MCF 10A (cell line): ENCODE measurements at regions of chr19 and their contacts with region 1.

Region 1: GRCh38 chr19:42596391-42597072 is 1.8 kb upstream of the CEACAM8 start:
- DNase-seq: peak; percentile 33
- H3K4me3 Mint-ChIP-seq: no peak overlapping the region
- H3K27ac Mint-ChIP-seq: no peak overlapping the region
- H3K4me1 Mint-ChIP-seq: no peaks in the 10 kb centered on the region
- H3K27me3 Mint-ChIP-seq: peaks cover 49% of the 10 kb centered on the region
- CTCF ChIP-seq: peak; percentile 96

Region 2: DNA sequence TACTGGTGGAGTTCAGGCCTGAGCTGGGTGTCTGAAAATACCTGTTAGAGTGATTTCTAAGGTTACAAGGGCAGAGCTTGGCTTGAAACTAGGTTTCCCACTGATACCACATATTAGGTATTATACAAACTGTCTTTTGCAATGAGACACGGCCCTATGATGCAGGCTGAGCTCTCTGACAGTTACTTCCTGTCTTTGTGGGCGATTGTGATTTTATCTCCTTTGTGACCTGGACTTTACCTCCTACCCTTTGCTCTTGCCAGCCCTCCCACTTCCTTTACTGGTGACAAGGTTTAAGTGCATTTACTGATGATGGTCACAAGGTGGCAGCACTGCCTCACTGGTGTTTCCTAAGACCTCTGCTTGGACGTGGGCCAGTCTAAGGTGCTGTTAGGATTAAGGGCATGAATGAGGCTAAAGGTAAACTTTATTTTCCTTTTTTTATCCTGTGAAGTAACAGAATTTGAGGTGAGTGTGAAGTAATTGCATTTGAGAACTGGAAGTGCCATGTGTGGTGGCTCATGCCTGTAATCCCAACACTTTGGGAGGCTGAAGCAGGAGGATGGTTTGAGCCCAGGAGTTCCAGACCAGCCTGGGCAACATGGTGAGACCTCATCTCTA is 146.1 kb before region 1 on chr19:
- CTCF ChIA-PET with region 1: interaction called, 14 read pairs
- POLR2A ChIA-PET with region 1: no interaction called
- intact Hi-C with region 1: loop called (anchors 2 kb)
- DNase-seq: peak; percentile 94
- H3K4me3 Mint-ChIP-seq: no peak overlapping the region
- H3K27ac Mint-ChIP-seq: no peak overlapping the region
- H3K4me1 Mint-ChIP-seq: peaks cover under 1% of the 10 kb centered on the region
- H3K27me3 Mint-ChIP-seq: peaks cover 14% of the 10 kb centered on the region
- CTCF ChIP-seq: peak; percentile 90

Region 3: DNA sequence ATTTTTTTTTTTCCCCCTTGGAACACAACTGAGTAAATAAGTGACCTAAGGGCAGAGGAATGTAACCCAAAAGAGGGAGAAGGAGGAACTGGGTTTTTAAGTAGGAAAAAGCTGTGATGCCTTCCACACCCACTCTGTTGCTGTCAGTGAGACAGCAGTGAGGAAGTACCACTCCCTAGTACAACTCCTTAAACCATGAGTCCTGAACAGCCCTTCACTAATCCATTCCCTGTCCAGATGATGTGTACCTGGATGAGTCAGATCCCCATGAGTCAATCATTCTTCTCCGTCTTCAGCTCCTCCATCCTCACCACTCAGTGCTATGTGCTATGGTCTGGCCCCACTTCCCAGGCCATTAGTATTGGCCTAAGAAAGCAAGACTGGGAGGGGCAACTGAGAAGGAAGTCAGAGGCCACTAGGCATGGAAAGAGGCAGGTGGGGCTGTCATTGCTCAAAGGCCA is 140.9 kb before region 1 on chr19:
- CTCF ChIA-PET with region 1: interaction called, 14 read pairs
- POLR2A ChIA-PET with region 1: no interaction called
- intact Hi-C with region 1: loop called (anchors 2 kb)
- DNase-seq: peak; percentile 77
- H3K4me3 Mint-ChIP-seq: no peak overlapping the region
- H3K27ac Mint-ChIP-seq: no peak overlapping the region
- H3K4me1 Mint-ChIP-seq: peaks cover 7% of the 10 kb centered on the region
- H3K27me3 Mint-ChIP-seq: peaks cover 14% of the 10 kb centered on the region
- CTCF ChIP-seq: no peak

Region 4: DNA sequence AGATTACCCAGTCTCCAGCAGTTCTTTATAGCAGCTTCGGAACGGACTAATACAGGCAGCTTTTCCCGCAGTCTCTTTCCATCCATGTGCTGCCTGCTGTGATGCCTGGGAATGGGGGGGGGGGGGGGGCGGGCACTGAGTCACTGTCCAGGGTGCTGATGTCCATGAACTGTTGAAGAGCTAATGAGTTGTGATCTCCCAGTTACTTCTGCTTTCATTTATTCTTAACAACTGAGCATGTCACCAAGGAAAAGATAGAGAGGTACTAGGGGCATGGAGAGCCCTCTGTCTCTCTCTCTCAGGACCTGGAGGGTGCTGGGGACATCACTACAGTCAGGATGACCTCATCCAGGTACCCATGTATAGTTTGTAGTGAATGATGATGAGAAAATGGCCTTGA is 48.0 kb before region 1 on chr19:
- CTCF ChIA-PET with region 1: no interaction called
- POLR2A ChIA-PET with region 1: no interaction called
- intact Hi-C with region 1: no loop called
- DNase-seq: no peak
- H3K4me3 Mint-ChIP-seq: no peak overlapping the region
- H3K27ac Mint-ChIP-seq: no peak overlapping the region
- H3K4me1 Mint-ChIP-seq: no peaks in the 10 kb centered on the region
- H3K27me3 Mint-ChIP-seq: peaks cover 28% of the 10 kb centered on the region
- CTCF ChIP-seq: no peak

Region 5: GRCh38 chr19:42563352-42564210 is 33.0 kb before region 1 on chr19:
- CTCF ChIA-PET with region 1: interaction called, 31 read pairs
- POLR2A ChIA-PET with region 1: no interaction called
- intact Hi-C with region 1: loop called (anchors 1 kb)
- DNase-seq: peak; percentile 60
- H3K4me3 Mint-ChIP-seq: no peak overlapping the region
- H3K27ac Mint-ChIP-seq: no peak overlapping the region
- H3K4me1 Mint-ChIP-seq: peaks cover 10% of the 10 kb centered on the region
- H3K27me3 Mint-ChIP-seq: peaks cover 24% of the 10 kb centered on the region
- CTCF ChIP-seq: peak; percentile 56

Region 6: DNA sequence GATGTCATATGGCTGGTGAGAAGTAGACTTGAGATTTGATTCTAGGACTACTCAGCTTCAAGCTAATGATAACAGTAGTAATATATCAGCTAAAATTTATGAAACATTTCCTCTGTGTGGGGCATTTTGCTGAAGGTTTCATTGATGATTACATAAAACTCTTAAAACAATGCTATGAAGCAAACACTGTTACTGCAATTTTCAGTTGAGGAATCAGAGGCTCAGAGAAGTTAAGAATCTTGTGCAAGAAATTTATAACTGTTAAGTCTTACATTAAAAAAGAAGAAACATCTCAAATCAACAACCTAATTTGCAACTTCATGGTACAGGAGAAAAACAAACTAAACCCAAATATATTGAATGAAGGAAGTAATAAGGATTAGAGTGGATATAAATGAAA is 12.1 kb before region 1 on chr19:
- CTCF ChIA-PET with region 1: interaction called, 11 read pairs
- POLR2A ChIA-PET with region 1: no interaction called
- intact Hi-C with region 1: no loop called
- DNase-seq: no peak
- H3K4me3 Mint-ChIP-seq: no peak overlapping the region
- H3K27ac Mint-ChIP-seq: no peak overlapping the region
- H3K4me1 Mint-ChIP-seq: no peaks in the 10 kb centered on the region
- H3K27me3 Mint-ChIP-seq: peaks cover 84% of the 10 kb centered on the region
- CTCF ChIP-seq: no peak

Region 7: GRCh38 chr19:42606660-42607351 is 10.3 kb after region 1 on chr19:
- CTCF ChIA-PET with region 1: interaction called, 10 read pairs
- POLR2A ChIA-PET with region 1: no interaction called
- intact Hi-C with region 1: no loop called
- DNase-seq: peak; percentile 74
- H3K4me3 Mint-ChIP-seq: no peak overlapping the region
- H3K27ac Mint-ChIP-seq: no peak overlapping the region
- H3K4me1 Mint-ChIP-seq: no peaks in the 10 kb centered on the region
- H3K27me3 Mint-ChIP-seq: peaks cover 49% of the 10 kb centered on the region
- CTCF ChIP-seq: peak; percentile 74